CD14-positive monocyte (primary cell): ENCODE measurements at regions of chr10 and their contacts with region 1.

Region 1: DNA sequence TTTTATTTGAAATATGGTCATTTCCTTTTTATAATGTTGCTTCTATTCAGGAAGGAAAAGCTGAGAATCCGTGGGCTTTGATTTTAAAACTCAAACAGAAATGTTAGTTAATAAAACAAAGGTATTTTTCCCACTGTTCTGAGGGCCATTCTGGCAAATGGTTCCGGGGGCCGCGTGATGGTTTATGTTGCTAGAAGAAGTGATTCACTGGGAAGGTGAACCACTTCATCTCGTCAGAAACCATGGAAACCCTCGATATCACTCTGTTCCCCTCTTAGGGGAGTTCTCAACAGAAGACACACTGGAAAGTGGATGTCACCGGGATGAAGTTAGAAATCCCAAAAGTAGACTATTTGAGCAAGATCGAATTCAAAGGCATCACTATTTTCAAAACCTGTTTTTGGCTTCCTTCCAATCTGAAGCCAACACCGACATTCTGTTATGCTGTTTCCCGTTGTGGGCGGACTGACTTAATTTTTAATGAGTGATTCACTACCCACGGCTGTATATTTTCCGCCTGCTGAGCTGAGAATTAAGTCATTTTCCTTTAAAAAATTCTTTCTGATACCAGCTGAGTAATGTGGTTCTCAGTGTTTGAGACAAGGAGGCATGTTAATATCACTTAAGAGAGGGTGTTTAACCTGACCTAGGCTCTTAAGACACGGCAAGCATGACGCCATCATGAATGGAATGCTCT is 84.1 kb downstream of the PTPRE start:
- DNase-seq: peak; percentile 55 to 75 (median 70)
- H3K4me3 ChIP-seq: peak overlapping the region in 1 of 3 experiments; percentile 17
- H3K4me3 Mint-ChIP-seq: peak overlapping the region; percentile 3 to 43
- H3K27ac ChIP-seq: peak overlapping the region in 1 of 2 donors; percentile 28
- H3K27ac Mint-ChIP-seq: peak overlapping the region in 5 of 7 donors; percentile 25 to 85 (median 60)
- H3K4me1 ChIP-seq: peaks cover 35 to 42% of the 10 kb centered on the region in 2 donors
- H3K4me1 Mint-ChIP-seq: peaks cover 56% of the 10 kb centered on the region
- H3K27me3 ChIP-seq: no peaks in the 10 kb centered on the region
- H3K27me3 Mint-ChIP-seq: peaks cover 0 to 3% (median 0%) of the 10 kb centered on the region in 3 donors
- CTCF ChIP-seq: no peak

Region 2: DNA sequence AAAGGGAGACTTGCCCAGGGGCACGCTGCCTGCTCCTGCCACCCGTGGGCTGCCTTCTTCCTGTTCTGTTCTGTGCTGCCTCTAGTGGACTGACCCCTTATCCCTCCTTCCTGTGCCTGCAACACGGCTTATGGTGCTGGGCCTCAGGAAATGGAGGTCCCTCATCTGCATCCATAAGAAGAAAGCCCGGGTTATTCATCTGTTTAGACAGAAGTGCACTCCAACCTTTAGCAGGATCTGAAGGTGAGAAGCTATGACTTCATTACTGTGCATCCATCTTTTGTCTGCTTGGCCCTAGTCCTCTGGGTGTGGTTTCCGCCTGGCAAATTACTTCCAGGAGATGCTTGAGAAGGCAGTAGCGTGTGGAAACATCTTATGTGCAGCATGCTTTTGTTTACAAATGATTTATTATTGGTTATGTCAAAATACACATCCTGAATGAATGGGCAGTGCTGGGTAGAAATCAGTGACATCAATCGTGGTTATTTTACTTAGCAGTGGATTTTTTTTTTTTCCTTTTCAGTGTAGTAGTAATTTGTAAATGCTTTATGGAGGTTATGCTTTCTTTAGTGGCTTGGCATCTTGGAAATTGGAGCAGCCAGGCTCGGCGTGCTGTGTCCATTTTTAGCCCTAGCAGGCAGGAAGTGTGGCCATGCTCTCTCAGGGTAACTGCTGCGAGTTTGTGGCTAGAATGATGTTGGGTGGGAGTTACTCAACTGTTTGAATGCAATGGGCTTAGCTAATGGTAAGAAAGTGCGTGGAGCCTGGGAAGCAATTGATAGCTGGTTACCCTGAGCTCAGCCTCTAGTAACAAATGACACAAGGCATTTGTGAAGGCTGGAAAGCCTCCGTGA is 71.3 kb before region 1 on chr10:
- intact Hi-C with region 1: loop called in 1 of 2 experiments (anchors 5 kb)
- DNase-seq: peak in 2 of 3 donors; percentile 45 to 58
- H3K4me3 ChIP-seq: peak overlapping the region in 1 of 3 experiments; percentile 67
- H3K4me3 Mint-ChIP-seq: peak overlapping the region; percentile 16 to 43
- H3K27ac ChIP-seq: peak overlapping the region; percentile 76 to 91
- H3K27ac Mint-ChIP-seq: peak overlapping the region; percentile 87 to 96 (median 95)
- H3K4me1 ChIP-seq: peaks cover 81 to 83% of the 10 kb centered on the region in 2 donors
- H3K4me1 Mint-ChIP-seq: peaks cover 80% of the 10 kb centered on the region
- H3K27me3 ChIP-seq: no peaks in the 10 kb centered on the region
- H3K27me3 Mint-ChIP-seq: peaks cover 0 to 3% (median 2%) of the 10 kb centered on the region in 3 donors
- CTCF ChIP-seq: peak; percentile 57

Region 3: DNA sequence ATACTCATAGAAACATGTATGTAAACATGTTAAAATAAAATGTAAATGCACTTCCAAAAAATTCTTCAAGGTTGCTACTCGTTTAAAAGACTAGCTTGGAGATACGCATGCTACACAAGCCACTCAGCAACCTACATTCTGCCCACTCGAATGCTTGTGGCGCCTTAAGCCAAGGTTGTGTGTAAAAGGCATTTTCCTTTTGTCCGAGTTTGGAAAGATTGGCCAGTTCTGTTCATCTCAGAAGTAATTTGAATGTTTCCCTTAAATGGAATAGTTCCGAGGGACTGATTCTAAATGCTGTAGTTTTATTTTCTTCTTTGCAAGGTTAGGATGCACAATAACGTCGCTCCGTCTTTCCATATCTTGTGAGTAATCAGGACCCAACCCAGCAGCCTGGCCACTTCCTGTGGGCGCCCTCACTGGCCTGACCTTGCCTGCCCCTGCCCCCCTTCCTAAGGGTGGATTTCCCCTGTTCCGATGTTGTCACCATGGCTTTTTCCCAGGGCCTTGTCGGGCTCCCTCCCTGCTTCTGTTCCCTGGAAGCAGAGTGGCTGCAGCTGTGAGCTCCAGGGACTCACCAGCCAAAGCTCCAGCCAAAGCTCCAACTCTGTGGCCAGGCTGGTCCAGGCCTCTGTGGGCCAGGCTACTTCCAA is 13.5 kb before region 1 on chr10:
- intact Hi-C with region 1: loop called in 1 of 2 experiments (anchors 1 kb)
- DNase-seq: peak; percentile 79 to 93 (median 79)
- H3K4me3 ChIP-seq: peak overlapping the region in 1 of 3 experiments; percentile 50
- H3K4me3 Mint-ChIP-seq: peak overlapping the region; percentile 48 to 79
- H3K27ac ChIP-seq: peak overlapping the region; percentile 7 to 72
- H3K27ac Mint-ChIP-seq: peak overlapping the region; percentile 76 to 95 (median 85)
- H3K4me1 ChIP-seq: peaks cover 66 to 72% of the 10 kb centered on the region in 2 donors
- H3K4me1 Mint-ChIP-seq: peaks cover 71% of the 10 kb centered on the region
- H3K27me3 ChIP-seq: no peaks in the 10 kb centered on the region
- H3K27me3 Mint-ChIP-seq: peaks cover 0 to 1% (median 0%) of the 10 kb centered on the region in 3 donors
- CTCF ChIP-seq: no peak